Activated T-helper 2 cell treated with anti-CD3 and anti-CD28 coated beads, Interferon-gamma antibody, Interleukin-2, Interleukin-4, amounts not matched to agents 10 μg/mL and 5 μg/mL and 100 μg/mL, durations not matched to agents 14 hours and 24 hours and 36 hours (primary cell): ENCODE measurements at regions of chr10 and their contacts with region 1.

Region 1: GRCh38 chr10:119103903-119104652 is at the start of gene DENND10:
- DNase-seq: peak; percentile 67
- H3K4me3 Mint-ChIP-seq: peak within 1 kb of the TSS; percentile 86
- H3K27ac Mint-ChIP-seq: peak within 1 kb of the TSS; percentile 31
- H3K4me1 Mint-ChIP-seq: peaks cover 33% of the 10 kb centered on the region
- H3K27me3 Mint-ChIP-seq: no peaks in the 10 kb centered on the region
- total RNA-seq, gene DENND10: 26.0 and 26.2 TPM in 2 replicates

Region 2: GRCh38 chr10:119131512-119132240 is 27.6 kb after region 1 on chr10:
- intact Hi-C with region 1: loop called (anchors 1 kb)
- DNase-seq: peak; percentile 60
- H3K4me3 Mint-ChIP-seq: peak overlapping the region; percentile 82
- H3K27ac Mint-ChIP-seq: peak overlapping the region; percentile 94
- H3K4me1 Mint-ChIP-seq: peaks cover 62% of the 10 kb centered on the region
- H3K27me3 Mint-ChIP-seq: no peaks in the 10 kb centered on the region

Region 3: GRCh38 chr10:119165171-119166110 is 61.4 kb after region 1 on chr10 and contains the start of gene SFXN4:
- intact Hi-C with region 1: loop called (anchors 1 kb)
- DNase-seq: peak; percentile 81
- H3K4me3 Mint-ChIP-seq: peak within 1 kb of the TSS; percentile 85
- H3K27ac Mint-ChIP-seq: peak within 1 kb of the TSS; percentile 93
- H3K4me1 Mint-ChIP-seq: peaks cover 37% of the 10 kb centered on the region
- H3K27me3 Mint-ChIP-seq: no peaks in the 10 kb centered on the region
- total RNA-seq, gene SFXN4: 43.5 and 44.8 TPM in 2 replicates